ENCODE measurements at regions of chr19 and their contacts with region 1.

Region 1: GRCh38 chr19:58380722-58381466 is at the start of gene ZNF837:
- DNase-seq: peak; percentile 99
- H3K4me3 Mint-ChIP-seq: peak within 1 kb of the TSS; percentile 90
- H3K27ac Mint-ChIP-seq: peak within 1 kb of the TSS; percentile 85
- H3K4me1 Mint-ChIP-seq: peaks cover 25% of the 10 kb centered on the region
- H3K27me3 Mint-ChIP-seq: no peaks in the 10 kb centered on the region
- total RNA-seq, gene ZNF837: 1.1 and 1.5 TPM in 2 replicates

Region 2: DNA sequence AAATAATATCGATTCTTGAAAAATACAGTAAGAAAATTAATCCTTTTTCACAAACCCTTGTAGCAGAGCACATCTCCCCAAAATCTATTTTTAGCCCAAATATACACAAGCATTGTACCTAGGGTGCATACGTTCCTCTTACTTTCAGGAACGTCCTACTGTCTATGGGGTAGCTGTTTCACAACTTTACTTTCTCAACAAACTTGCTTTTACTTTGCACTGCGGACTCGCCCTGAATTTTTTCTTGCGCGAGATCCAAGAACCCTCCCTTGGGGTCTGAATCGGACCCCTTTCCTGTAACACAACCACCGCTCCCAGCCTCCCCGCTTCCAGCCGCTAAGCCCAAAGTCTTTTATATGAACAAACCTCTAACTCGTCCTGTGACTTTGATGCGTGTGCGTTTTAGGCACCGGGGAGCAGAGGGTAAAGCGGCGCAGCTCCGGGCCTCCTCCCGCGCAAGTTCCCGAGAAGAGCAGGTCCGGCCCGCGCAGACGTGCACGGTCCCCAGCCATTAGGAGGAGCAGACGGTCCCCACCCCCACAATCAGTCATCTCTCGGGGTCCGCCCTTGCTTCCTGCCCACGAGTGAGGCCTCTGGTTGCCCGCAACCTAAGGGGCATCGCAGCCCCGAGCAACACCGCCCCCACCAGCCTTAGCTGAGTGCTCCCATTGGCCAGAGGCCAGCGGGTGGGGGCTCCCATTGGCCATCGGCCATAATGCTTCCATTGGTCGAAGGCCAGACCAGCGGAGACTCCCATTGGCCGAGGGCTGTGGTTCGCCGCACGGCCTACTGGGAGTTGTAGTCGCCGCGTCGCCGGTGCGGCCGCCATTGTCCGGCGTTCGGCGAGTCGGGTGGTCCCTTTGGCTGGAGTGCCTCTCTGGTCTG is 102.5 kb before region 1 on chr19 and contains the start of gene ZNF8:
- intact Hi-C with region 1: loop called (anchors 2 kb)
- DNase-seq: peak; percentile 96
- H3K4me3 Mint-ChIP-seq: peak within 1 kb of the TSS; percentile 94
- H3K27ac Mint-ChIP-seq: peak within 1 kb of the TSS; percentile 94
- H3K4me1 Mint-ChIP-seq: peaks cover 21% of the 10 kb centered on the region
- H3K27me3 Mint-ChIP-seq: no peaks in the 10 kb centered on the region
- total RNA-seq, gene ZNF8: 4.7 and 5.3 TPM in 2 replicates

Region 3: DNA sequence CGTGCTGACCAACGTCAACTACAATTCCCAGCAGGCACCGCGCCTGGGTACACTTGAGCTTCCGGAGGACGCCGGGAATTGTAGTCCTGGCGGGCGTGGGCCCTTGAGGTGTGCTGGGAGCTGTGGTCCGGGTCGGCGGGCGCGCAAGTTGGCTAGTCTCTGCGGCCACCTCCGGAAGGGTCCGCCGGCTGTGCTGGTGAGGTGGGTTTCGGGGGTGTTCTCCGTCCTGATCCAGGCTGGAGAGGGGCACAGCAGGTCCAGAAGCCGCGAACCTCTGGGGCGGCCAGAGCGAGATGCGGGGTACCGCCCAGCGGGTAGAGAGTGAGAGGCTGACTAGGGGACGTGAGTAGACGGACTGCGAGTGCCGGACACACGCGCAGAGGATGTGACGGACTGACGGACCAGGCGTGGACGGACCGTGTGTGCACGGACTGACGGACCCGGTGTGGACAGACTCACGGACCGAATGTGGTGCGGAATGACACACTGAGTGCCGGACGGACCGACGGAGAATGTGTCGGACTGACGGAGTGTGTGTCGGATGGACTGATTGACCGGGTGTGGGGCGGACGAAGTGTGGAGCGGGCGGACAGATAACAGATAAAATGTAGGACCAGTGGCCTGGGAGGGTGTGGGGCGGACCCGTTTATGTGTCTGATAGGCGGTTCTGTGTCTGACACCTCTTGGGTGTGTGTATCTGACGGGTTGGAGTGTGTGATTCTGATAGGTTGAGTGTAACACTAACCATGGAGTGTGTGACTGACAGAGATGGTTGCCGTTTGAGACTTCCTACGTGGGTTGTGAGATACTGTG is 53.8 kb before region 1 on chr19 and contains the start of gene ZSCAN22:
- intact Hi-C with region 1: loop called (anchors 1 kb)
- DNase-seq: peak; percentile 86
- H3K4me3 Mint-ChIP-seq: no peak within 1 kb of the TSS
- H3K27ac Mint-ChIP-seq: no peak within 1 kb of the TSS
- H3K4me1 Mint-ChIP-seq: peaks cover 2% of the 10 kb centered on the region
- H3K27me3 Mint-ChIP-seq: no peaks in the 10 kb centered on the region
- total RNA-seq, gene ZSCAN22: 4.6 and 4.9 TPM in 2 replicates

Region 4: GRCh38 chr19:58400916-58401839 is 20.3 kb after region 1 on chr19:
- intact Hi-C with region 1: loop called (anchors 1 kb)
- DNase-seq: peak; percentile 99
- H3K4me3 Mint-ChIP-seq: peak overlapping the region; percentile 80
- H3K27ac Mint-ChIP-seq: peak overlapping the region; percentile 58
- H3K4me1 Mint-ChIP-seq: peaks cover 12% of the 10 kb centered on the region
- H3K27me3 Mint-ChIP-seq: peaks cover 5% of the 10 kb centered on the region

Region 5: DNA sequence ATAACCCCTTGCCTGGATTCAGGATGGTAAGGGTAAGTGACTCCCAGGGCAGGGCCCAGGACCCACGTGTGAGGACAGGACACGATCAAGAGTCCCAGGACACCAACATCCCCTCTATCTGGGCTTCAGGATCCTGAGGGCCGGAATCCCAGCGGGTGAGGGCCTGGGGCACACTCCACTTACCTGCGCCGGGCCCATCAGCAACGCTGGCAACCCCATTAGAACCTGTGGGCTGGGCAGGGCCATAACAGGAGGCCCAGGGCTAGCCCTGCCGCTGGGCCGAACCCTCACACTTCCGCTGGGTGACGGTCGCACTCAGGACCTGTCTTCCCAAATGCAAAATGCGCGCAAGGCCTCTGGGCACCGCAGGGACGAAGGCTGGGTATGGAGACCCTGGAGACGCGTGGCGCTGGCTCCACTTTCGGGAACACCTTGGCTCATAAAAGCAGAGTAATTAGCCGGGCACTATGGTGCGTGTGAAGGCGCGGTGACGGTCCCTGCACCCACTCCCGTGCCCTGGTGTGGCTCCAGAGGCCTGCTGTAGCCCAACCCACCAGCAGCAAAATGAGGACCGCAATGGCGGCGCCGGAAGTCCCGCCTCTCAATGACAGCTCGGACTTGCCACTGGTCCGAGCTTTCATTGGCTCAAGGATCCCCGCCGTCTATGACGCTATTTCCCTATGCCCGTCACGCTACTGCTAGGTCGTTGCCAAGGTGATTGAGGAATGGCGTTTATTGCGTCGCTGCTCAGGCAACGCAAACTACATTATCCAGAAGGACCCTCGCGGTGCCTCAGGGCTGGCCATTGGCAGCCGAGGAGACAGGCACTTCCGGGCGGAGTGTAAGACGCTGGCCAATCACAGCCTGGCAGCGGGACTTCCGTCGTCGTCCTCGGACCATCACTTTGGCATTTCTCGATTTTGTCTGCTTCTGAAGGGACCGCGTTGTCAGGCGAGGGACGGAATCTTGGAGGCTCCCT is 59.0 kb after region 1 on chr19 and contains the start of gene ZNF132:
- intact Hi-C with region 1: loop called (anchors 1 kb)
- DNase-seq: peak; percentile 94
- H3K4me3 Mint-ChIP-seq: peak within 1 kb of the TSS; percentile 85
- H3K27ac Mint-ChIP-seq: peak within 1 kb of the TSS; percentile 80
- H3K4me1 Mint-ChIP-seq: peaks cover 18% of the 10 kb centered on the region
- H3K27me3 Mint-ChIP-seq: no peaks in the 10 kb centered on the region
- total RNA-seq, gene ZNF132: 3.2 and 3.4 TPM in 2 replicates

Region 6: DNA sequence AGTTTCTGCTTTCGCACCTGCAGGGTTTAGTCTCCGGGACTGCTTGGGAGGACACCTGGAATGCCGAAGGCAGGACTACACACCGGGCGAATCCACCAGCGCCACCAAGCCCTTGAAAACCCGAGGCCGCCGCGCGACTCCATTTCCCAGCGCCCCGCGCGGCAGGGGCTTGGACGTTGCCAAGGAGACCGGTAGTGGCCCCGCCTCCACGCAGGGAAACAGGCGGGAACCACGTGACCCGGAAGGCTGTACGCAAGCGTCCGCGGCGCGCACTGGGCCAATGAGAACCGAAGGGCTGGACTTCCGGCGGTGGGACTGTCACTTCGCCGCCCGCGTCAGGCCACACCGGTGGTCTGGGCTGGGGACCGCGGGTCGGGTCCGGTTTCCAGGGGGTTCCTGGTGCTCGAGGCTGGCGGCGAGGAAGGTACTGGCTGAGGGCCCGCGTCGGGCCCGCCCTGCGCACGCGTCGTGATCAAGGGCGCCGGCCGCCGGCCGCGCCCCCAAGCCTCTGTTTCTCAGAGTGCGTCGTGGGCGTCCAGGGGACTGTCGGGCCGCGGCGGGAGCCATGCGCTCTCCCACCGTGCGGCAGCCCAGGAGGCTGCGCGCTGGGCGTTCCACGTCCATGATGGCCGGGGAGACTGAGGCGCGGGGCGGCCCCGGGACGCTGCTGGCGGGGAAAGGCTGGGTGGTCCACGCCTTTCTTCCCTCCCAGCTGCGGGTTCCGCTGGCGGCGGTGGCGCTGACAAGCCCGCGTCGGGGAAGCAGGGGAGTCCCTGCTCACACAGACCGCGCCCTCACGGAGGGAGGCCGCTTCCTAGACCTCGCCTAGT is 86.1 kb after region 1 on chr19 and contains the start of gene ZNF324:
- intact Hi-C with region 1: no loop called
- DNase-seq: peak; percentile 96
- H3K4me3 Mint-ChIP-seq: peak within 1 kb of the TSS; percentile 80
- H3K27ac Mint-ChIP-seq: peak within 1 kb of the TSS; percentile 68
- H3K4me1 Mint-ChIP-seq: peaks cover 13% of the 10 kb centered on the region
- H3K27me3 Mint-ChIP-seq: no peaks in the 10 kb centered on the region
- total RNA-seq, gene ZNF324: 11.6 and 12.3 TPM in 2 replicates